Posterior cingulate gyrus (tissue), 11 donors: ENCODE measurements at regions of chr19 and their contacts with region 1.

Region 1: DNA sequence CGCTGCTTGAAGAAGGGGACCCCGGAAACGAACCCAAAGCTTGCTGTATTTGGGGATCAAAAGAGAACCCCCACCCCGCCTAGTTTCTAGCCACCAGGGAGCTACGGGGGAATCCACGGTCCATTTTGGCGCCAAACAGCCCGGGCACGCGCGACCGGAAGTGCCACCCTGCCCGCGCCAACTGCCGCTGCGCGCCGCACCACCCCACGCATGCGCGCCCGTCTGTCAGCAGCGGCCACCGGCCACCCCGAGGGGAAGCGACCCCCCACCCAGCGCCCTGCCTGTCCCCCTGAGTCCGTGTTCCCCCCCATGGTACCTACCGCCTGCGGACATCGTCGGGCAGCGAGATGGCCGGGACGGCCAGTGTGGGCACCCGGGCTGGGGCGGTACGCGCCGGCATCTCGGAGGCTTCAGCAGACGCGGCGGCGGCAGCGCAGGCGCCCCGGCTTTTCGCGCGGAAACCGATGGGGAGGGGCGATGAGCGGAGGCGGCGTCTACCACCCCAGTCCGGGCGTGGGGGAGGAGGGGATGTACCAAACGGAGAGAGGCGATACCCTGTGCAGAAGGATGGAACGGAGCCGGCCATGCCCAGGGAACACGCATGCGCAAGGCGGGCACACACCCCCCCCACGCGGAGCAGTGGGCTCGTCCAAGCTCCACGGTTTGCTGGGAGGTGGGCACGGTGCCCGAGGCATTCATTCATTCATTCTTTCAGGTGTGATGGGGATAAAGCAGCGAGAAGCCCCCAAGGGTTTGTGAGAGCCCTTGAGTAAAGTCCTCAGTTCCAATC is at the start of gene DNMT1:
- DNase-seq: peak; percentile 96 to 99 (median 97)

Region 2: DNA sequence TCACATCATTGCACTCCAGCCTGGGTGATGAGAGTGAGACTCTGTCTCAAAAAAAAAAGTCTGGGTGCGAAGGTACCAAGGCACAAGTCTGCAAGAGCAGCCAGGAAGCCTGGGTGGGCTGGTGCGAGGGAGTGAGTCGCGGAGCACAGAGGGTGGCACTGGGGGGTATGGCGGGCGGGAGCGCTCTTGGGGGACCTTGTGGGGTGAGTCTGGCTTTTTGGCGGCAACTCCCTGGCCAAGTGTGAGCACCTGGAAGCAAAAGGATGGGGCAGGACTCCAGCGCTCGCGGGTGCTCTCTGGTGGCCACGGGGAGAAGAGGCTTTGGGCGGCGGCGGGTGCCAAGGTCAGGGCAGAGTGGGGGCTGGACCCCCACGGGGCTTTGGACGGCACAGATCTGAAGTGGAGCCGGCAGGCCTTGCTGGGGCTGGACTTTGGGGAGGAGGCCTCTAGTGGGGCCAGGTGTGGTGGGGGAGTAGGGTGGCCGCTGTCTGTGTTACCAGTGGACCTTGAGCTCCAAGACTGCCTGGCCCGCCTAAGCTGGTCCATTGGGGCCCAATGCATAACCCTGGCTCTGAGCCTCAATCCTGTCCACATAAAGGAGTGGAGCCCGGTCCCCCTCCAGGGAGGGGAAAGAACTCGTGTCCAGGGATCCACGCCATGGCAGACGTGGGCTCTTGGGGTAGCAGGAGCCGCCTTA is 81.7 kb before region 1 on chr19:
- intact Hi-C with region 1: no loop called
- DNase-seq: peak in 4 of 10 donors; percentile 30 to 91 (median 59)

Region 3: GRCh38 chr19:10142701-10143375 is 51.9 kb before region 1 on chr19:
- intact Hi-C with region 1: no loop called
- DNase-seq: no peak

Region 4: GRCh38 chr19:10227026-10227971 is 32.6 kb after region 1 on chr19:
- intact Hi-C with region 1: loop called (anchors 2 kb)
- DNase-seq: peak; percentile 83 to 99 (median 92)

Region 5: DNA sequence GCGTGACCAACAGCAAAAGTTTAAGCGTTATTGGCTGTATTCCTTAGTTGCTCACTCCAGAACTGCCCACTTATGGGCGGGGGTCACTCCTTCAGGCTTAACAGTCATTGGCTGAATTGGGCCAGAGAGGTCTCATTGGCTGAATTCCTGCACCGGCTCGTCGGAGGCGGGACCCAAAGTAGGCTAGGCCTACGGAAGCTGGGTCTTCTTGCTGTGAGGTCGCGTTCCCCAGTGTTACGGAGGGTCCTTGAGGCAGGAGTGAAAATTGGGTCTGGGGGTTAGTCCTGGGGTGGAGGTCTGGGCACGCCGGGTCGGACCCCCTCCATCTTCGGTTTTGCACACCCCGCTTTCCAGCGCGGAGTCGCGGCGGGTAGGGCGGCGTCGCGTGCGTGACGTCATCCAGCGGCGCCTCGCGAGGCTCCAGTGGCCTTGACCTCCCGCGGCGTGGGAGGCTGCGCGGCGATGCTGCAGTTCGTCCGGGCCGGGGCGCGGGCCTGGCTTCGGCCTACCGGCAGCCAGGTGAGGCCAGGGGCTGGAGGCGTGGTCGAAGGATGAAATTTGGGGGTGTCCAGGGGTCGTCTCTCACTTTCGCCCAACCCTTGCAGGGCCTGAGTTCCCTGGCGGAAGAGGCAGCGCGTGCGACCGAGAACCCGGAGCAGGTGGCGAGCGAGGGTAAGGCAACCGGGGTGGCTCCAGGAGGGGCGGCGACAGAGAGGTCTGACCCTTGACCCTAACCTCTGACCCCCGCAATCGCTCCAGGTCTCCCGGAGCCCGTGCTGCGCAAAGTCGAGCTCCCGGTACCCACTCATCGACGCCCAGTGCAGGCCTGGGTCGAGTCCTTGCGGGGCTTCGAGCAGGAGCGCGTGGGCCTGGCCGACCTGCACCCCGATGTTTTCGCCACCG is 57.3 kb after region 1 on chr19 and contains the start of gene MRPL4:
- intact Hi-C with region 1: loop called (anchors 5 kb)
- DNase-seq: peak; percentile 89 to 99 (median 94)

Region 6: GRCh38 chr19:10269333-10270179 is 74.9 kb after region 1 on chr19:
- intact Hi-C with region 1: no loop called
- DNase-seq: peak; percentile 61 to 97 (median 82)